ENCODE measurements at regions of chr13 and their contacts with region 1.

Region 1: DNA sequence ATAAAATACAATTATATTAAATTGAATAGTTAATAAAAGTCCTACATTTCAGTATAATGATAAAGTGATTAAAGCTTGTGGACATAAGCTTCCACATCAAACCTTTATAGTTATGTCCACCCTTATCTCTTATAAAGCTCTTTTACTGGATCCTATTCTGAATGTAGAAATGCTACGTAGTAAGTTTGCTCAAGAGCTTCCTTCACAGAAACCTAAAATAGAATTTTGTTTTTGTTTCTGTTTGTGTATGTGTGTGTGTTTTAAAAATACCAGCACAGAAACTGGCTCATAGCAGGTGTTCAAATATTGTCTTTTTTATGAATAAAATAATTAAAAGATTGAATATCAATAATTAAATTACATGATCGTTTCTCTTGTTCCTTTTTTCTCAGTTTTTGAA is 21.0 kb upstream of the UFM1 start:
- DNase-seq: no peak
- ATAC-seq: no peak
- H3K4me3 ChIP-seq: no peak overlapping the region
- H3K27ac ChIP-seq: no peak overlapping the region
- H3K4me1 ChIP-seq: no peaks in the 10 kb centered on the region
- H3K27me3 ChIP-seq: no peaks in the 10 kb centered on the region
- CTCF ChIP-seq: no peak
- EP300 ChIP-seq: no peak
- POLR2A ChIP-seq: no peak
- RAD21 ChIP-seq: no peak

Region 2: GRCh38 chr13:38228322-38228721 is 100.4 kb before region 1 on chr13:
- CTCF ChIA-PET with region 1: no interaction called
- POLR2A ChIA-PET with region 1: no interaction called
- in situ Hi-C with region 1: loop called (anchors 5 kb)
- intact Hi-C with region 1: no loop called
- DNase-seq: no peak
- ATAC-seq: no peak
- H3K4me3 ChIP-seq: no peak overlapping the region
- H3K27ac ChIP-seq: no peak overlapping the region
- H3K4me1 ChIP-seq: no peaks in the 10 kb centered on the region
- H3K27me3 ChIP-seq: no peaks in the 10 kb centered on the region
- CTCF ChIP-seq: no peak
- EP300 ChIP-seq: no peak
- POLR2A ChIP-seq: no peak
- RAD21 ChIP-seq: no peak